ENCODE measurements at regions of chr17 and their contacts with region 1.

Region 1: DNA sequence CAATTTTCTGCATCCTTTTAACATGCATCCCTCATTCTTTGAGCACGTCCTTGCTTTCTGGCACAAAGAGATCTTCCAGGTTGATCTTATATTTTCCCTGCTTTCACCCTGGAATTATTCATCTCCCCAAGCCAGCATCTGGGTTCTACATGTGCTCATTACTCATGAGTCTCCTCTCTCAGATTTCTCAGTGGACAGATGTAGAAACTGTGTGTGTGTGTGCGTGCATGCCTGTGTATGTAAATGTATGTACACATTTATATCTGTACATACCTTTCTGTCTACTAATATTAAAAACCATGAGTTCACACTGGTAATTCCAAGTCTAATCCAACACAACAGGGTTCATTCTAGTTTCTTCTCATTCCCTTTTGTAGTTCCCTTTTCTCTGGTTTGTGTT is 41.9 kb upstream of the NSRP1 start:
- DNase-seq: no peak

Region 2: DNA sequence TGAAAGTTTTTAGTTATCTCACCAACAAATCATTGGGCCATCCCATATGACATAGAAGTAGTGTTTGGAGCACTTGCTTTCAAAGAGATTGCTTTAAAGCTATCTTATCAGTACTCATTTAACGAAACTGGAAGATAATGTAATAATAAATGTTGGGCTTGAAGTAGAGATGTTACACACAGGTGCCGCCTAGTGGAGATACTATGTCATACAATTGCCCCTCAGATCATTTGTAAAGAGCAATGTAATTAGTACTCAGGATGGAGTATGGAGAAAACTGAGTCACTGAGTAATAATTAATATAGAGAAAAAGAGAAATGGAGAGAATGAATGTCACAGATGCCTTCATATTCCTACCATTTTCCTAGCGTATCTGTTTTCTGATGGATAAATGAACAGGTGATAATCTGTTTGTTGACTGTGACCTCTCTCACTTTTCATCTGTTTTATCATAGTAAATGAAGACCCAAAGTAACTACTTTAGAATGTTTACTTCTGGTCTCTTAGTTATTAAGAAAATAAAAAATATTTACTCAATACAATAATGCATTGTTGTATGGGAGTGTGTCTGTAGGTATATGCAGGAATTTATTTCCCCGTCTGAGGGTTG is 52.9 kb before region 1 on chr17:
- intact Hi-C with region 1: loop called in 1 of 2 experiments (anchors 10 kb)
- DNase-seq: no peak

Region 3: GRCh38 chr17:30263552-30264333 is 189.0 kb after region 1 on chr17:
- intact Hi-C with region 1: no loop called
- DNase-seq: no peak